ENCODE measurements at regions of chr18 and their contacts with region 1.

Region 1: GRCh38 chr18:59996370-59996966 is 96.7 kb downstream of the PMAIP1 start:
- DNase-seq: peak; percentile 26 to 37 (median 35)
- ATAC-seq: peak; percentile 79
- H3K4me3 ChIP-seq: no peak overlapping the region
- H3K27ac ChIP-seq: no peak overlapping the region
- H3K4me1 ChIP-seq: no peaks in the 10 kb centered on the region
- H3K27me3 ChIP-seq: no peaks in the 10 kb centered on the region
- CTCF ChIP-seq: peak; percentile 41 to 64 (median 58)
- EP300 ChIP-seq: no peak
- POLR2A ChIP-seq: no peak
- RAD21 ChIP-seq: peak; percentile 55 to 74

Region 2: DNA sequence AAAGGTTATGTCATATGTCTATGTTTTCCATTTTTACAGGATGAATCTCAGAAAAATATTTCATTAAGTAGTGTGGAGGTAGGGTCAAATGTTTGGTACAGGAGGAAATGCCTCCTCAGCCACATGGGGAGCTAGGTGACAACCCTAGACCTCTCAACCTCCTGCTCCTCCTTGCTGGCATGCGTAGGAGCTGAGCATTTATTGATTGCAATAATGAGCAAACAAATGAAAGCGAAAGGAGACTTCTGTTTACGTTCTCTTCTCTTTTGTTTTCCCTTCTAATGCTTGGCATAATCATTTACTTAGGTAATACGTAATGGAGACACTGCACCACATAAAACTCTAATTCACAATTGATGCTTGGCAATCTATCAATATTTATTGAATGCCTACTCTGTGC is 204.1 kb before region 1 on chr18:
- CTCF ChIA-PET with region 1: no interaction called
- POLR2A ChIA-PET with region 1: no interaction called
- in situ Hi-C with region 1: no loop called
- intact Hi-C with region 1: no loop called
- DNase-seq: no peak
- ATAC-seq: no peak
- H3K4me3 ChIP-seq: no peak overlapping the region
- H3K27ac ChIP-seq: no peak overlapping the region
- H3K4me1 ChIP-seq: no peaks in the 10 kb centered on the region
- H3K27me3 ChIP-seq: no peaks in the 10 kb centered on the region; a peak in 1 of 5 replicates
- CTCF ChIP-seq: no peak
- EP300 ChIP-seq: no peak
- POLR2A ChIP-seq: no peak
- RAD21 ChIP-seq: no peak

Region 3: GRCh38 chr18:60067426-60068210 is 71.2 kb after region 1 on chr18:
- CTCF ChIA-PET with region 1: no interaction called
- POLR2A ChIA-PET with region 1: no interaction called
- in situ Hi-C with region 1: no loop called
- intact Hi-C with region 1: no loop called
- DNase-seq: no peak
- ATAC-seq: no peak
- H3K4me3 ChIP-seq: no peak overlapping the region
- H3K27ac ChIP-seq: no peak overlapping the region
- H3K4me1 ChIP-seq: no peaks in the 10 kb centered on the region; a peak in 1 of 5 replicates
- H3K27me3 ChIP-seq: no peaks in the 10 kb centered on the region
- CTCF ChIP-seq: no peak
- EP300 ChIP-seq: no peak
- POLR2A ChIP-seq: no peak
- RAD21 ChIP-seq: no peak

Region 4: DNA sequence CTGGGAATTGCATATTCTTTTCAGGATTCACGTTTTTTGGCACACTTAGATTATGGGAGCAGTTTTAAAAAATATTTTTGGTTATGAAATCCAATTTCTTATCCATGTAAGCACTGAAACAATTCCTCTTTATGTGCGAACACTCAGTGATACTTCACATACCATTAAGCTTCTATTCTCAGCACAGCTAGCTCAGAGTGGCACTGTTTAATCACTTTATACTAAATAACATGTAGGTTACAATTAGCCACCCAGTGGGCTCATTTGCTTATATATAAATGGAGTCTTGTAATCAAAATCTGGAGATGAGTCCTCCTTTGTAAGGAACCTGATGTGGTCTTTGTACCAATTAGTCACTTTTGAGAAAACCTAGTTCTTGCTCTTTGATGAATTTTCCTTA is 387.4 kb after region 1 on chr18:
- CTCF ChIA-PET with region 1: no interaction called
- POLR2A ChIA-PET with region 1: no interaction called
- in situ Hi-C with region 1: no loop called
- intact Hi-C with region 1: no loop called
- DNase-seq: no peak
- ATAC-seq: no peak
- H3K4me3 ChIP-seq: no peak overlapping the region
- H3K27ac ChIP-seq: no peak overlapping the region
- H3K4me1 ChIP-seq: no peaks in the 10 kb centered on the region
- H3K27me3 ChIP-seq: no peaks in the 10 kb centered on the region
- CTCF ChIP-seq: no peak
- EP300 ChIP-seq: no peak
- POLR2A ChIP-seq: no peak
- RAD21 ChIP-seq: no peak

Region 5: DNA sequence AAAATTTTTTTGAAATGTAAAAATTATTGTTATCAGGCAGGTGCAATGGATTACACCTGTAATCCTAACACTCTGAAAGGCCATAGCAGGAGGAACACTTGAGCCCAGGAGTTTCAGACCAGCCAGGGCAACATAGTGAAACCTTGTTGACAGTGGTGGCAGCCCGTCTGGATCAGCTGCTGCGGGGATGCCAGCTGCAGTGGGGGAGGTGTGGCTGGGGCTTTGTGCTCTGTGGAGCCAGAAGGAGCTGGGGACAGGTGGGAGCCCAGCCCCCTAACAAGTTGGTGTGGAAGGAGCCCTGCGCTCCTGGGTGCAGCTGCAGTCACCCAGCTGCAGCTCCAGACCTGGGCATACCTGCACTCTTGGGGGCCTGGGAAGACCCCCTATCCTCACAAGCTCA is 558.5 kb after region 1 on chr18:
- CTCF ChIA-PET with region 1: no interaction called
- POLR2A ChIA-PET with region 1: interaction called, 3 read pairs
- in situ Hi-C with region 1: loop called (anchors 10 kb)
- intact Hi-C with region 1: no loop called
- DNase-seq: no peak
- ATAC-seq: no peak
- H3K4me3 ChIP-seq: no peak overlapping the region
- H3K27ac ChIP-seq: no peak overlapping the region
- H3K4me1 ChIP-seq: no peaks in the 10 kb centered on the region
- H3K27me3 ChIP-seq: no peaks in the 10 kb centered on the region
- CTCF ChIP-seq: no peak
- EP300 ChIP-seq: no peak
- POLR2A ChIP-seq: no peak
- RAD21 ChIP-seq: no peak

Region 6: GRCh38 chr18:61290616-61291015 is 1294.1 kb after region 1 on chr18:
- CTCF ChIA-PET with region 1: no interaction called
- POLR2A ChIA-PET with region 1: no interaction called
- in situ Hi-C with region 1: no loop called
- intact Hi-C with region 1: no loop called
- DNase-seq: no peak
- ATAC-seq: no peak
- H3K4me3 ChIP-seq: no peak overlapping the region
- H3K27ac ChIP-seq: no peak overlapping the region
- H3K4me1 ChIP-seq: no peaks in the 10 kb centered on the region
- H3K27me3 ChIP-seq: no peaks in the 10 kb centered on the region
- CTCF ChIP-seq: no peak
- EP300 ChIP-seq: no peak
- POLR2A ChIP-seq: no peak
- RAD21 ChIP-seq: no peak

Measured in K562 (cell line).